ENCODE measurements at regions of chr4 and their contacts with region 1.

Region 1: DNA sequence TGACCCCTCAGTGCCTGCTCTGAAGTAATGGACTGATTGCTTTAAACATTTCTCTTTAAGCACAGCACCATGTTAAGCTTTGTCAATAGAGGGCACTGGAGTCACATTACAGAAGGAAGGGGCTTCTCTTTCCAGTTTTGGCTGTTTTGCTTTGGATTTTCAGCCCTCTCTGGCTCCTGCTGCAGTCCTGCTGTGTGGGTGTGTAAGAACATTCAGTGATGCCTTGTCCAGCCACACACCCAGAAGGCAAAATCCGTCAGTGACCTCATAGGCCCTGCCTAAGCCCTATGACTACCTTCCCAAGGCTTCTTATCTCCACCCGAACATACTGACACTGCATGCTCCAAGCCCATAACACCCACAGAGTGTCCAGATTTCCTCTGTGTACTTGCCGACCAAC is 215.3 kb upstream of the CTSO start:
- DNase-seq: no peak
- ATAC-seq: no peak
- H3K4me3 Mint-ChIP-seq: no peak overlapping the region
- H3K27ac Mint-ChIP-seq: no peak overlapping the region
- H3K4me1 Mint-ChIP-seq: no peaks in the 10 kb centered on the region
- H3K27me3 Mint-ChIP-seq: no peaks in the 10 kb centered on the region

Region 2: DNA sequence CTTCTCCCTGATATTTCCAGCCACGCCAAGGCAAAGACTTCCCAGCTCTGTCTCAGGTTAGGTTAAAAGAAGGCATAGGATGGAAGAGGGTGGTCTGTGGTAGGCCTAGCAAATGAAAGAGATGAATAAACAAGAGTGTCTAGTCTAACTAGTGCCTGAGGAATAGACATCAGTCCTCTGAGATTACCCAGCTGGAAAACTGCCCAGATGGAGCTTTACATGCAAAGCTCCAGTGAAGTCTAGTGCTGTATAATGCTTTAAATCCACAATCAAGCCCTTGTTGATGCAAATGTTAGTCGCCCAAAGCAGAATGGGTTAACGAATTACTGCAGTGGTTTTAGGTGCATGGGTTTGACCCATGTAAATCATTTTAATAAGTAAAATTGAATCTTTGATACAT is 434.9 kb before region 1 on chr4:
- CTCF ChIA-PET with region 1: no interaction called
- POLR2A ChIA-PET with region 1: no interaction called
- intact Hi-C with region 1: no loop called
- DNase-seq: no peak
- ATAC-seq: no peak
- H3K4me3 Mint-ChIP-seq: no peak overlapping the region
- H3K27ac Mint-ChIP-seq: no peak overlapping the region
- H3K4me1 Mint-ChIP-seq: no peaks in the 10 kb centered on the region
- H3K27me3 Mint-ChIP-seq: peaks cover 3% of the 10 kb centered on the region

Region 3: DNA sequence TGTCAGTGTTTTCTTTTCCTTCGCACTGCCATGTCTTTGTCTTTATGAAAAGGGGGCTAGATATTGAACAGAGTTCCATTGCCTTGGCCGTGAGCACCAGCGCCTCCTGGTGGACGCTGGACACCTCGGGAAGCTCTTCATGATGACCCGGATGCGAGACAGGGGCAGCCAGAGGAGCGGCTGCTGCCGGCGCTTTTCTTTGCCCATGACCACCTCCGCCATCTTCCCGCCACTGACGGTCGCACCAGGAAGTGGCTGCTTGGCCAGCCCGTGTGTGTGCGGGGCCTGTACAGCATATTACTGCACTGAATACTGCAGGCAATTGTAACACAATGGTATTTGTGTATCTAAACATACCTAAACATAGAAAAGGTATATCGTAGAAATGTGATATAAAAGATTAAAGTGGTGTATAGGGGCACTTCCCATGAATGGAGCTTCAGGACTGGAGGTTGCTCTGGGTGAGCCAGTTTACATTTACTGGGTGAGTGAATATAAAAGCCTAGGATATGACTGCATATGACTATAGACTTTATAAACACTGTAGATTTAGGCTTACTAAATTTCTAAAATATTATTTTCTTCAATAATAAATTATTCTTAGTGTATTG is 1035.7 kb after region 1 on chr4:
- CTCF ChIA-PET with region 1: no interaction called
- POLR2A ChIA-PET with region 1: no interaction called
- intact Hi-C with region 1: loop called in 1 of 2 experiments (anchors 10 kb)
- DNase-seq: peak; percentile 57
- ATAC-seq: no peak
- H3K4me3 Mint-ChIP-seq: no peak overlapping the region
- H3K27ac Mint-ChIP-seq: no peak overlapping the region
- H3K4me1 Mint-ChIP-seq: no peaks in the 10 kb centered on the region
- H3K27me3 Mint-ChIP-seq: no peaks in the 10 kb centered on the region